ENCODE measurements at regions of chr7 and their contacts with region 1.

Region 1: GRCh38 chr7:140673063-140673773 is 473 bp downstream of the ADCK2 start:
- DNase-seq: peak; percentile 69
- H3K4me3 ChIP-seq: peak overlapping the region; percentile 81
- H3K27ac ChIP-seq: peak overlapping the region; percentile 98
- H3K4me1 ChIP-seq: peaks cover 63% of the 10 kb centered on the region
- CTCF ChIP-seq: peak; percentile 29; the same call in 1 of the 2 replicates

Region 2: GRCh38 chr7:139915864-139916716 is 757.1 kb before region 1 on chr7:
- CTCF ChIA-PET with region 1: no interaction called
- POLR2A ChIA-PET with region 1: no interaction called
- intact Hi-C with region 1: loop called (anchors 10 kb)
- DNase-seq: peak; percentile 89
- H3K4me3 ChIP-seq: peak overlapping the region; percentile 60
- H3K27ac ChIP-seq: peak overlapping the region; percentile 97
- H3K4me1 ChIP-seq: peaks cover 76% of the 10 kb centered on the region
- CTCF ChIP-seq: no peak

Region 3: GRCh38 chr7:140479062-140479738 is 194.0 kb before region 1 on chr7 and contains the start of gene MKRN1:
- CTCF ChIA-PET with region 1: no interaction called
- POLR2A ChIA-PET with region 1: no interaction called
- intact Hi-C with region 1: loop called (anchors 1 kb)
- DNase-seq: peak; percentile 94
- H3K4me3 ChIP-seq: peak within 1 kb of the TSS; percentile 98
- H3K27ac ChIP-seq: peak within 1 kb of the TSS; percentile 72
- H3K4me1 ChIP-seq: peaks cover 24% of the 10 kb centered on the region
- CTCF ChIP-seq: no peak
- total RNA-seq, gene MKRN1: 26.4 and 47.5 TPM in 2 replicates

Region 4: DNA sequence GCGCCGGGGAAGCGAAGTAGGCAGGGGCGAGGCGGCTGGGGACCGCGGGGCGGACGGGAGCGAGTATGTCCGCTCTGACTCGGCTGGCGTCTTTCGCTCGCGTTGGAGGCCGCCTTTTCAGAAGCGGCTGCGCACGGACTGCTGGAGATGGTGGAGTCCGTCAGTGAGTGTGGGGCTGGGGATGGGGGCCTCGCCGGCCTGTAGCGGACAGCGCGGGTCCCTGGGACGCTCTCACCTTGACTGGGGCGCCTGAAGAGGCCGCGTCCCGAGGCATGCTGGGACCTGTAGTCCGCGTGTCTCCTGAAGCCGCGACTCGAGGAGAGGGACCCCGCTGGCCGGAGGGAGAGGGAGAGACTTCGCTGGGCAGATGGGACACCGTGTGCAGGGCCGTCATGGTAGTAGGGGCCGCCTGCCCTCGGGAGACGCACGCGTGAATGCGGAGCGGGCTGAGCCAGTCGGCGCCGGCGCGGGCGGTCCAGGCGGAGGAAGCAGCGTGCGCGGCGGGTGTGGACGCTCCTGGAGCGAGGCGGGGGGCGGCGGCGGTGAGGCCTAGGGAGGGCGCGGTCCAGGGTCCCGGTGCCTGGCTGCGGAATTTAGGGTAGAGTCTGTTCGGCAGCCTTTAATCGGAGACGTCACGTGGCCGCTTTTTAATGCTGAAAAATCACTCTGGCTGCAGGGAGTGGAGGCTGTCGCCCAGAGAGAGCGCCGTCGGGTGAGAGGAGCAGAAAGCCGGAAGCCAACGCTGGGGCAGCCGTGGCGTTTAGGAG is 23.6 kb after region 1 on chr7 and contains the start of gene NDUFB2:
- CTCF ChIA-PET with region 1: no interaction called
- POLR2A ChIA-PET with region 1: interaction called, 10 read pairs
- intact Hi-C with region 1: loop called (anchors 1 kb)
- DNase-seq: peak; percentile 81
- H3K4me3 ChIP-seq: peak within 1 kb of the TSS; percentile 77
- H3K27ac ChIP-seq: peak within 1 kb of the TSS; percentile 66
- H3K4me1 ChIP-seq: peaks cover 21% of the 10 kb centered on the region
- CTCF ChIP-seq: peak; percentile 33; the same call in 1 of the 2 replicates
- total RNA-seq, gene NDUFB2: 139 and 158 TPM in 2 replicates

Region 5: DNA sequence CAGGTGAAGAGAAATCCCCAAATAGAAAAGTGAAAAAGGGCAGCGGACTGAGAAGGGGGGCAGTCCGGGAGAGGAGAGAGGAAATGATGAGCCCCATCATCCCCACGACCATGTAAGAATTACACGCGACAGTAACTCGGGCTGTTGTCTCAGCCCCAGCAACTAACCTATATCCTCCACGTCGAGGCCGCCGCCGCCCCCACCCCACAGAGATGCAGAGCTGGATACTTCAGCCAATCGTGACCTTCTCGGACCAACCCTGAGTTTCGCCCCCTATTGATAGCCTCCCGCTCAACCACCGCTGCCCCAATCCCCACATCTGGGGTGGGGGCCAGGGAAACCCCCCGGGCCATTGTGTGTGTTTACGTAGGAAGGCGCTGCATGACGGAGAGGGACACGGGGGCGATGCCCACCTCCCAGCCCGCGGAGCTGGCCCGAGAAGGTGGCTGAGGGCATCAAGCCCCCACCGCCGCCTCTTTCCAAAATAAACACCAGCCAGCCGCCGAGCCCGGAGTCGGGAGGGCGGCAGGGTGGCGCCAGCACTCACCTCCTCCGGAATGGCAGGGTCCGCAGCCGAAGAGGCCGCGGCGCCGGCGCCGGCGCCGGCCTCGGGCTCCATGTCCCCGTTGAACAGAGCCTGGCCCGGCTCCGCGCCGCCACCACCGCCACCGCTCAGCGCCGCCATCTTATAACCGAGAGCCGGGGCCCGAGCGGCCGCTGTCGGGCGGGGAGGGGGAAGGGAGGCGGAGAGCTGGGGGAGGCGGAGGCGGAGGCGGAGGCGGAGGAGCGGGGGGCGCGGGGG is 251.0 kb after region 1 on chr7:
- CTCF ChIA-PET with region 1: no interaction called
- POLR2A ChIA-PET with region 1: no interaction called
- intact Hi-C with region 1: loop called (anchors 2 kb)
- DNase-seq: peak; percentile 80
- H3K4me3 ChIP-seq: peak overlapping the region; percentile 92
- H3K27ac ChIP-seq: peak overlapping the region; percentile 73
- H3K4me1 ChIP-seq: peaks cover 36% of the 10 kb centered on the region
- CTCF ChIP-seq: peak; percentile 76

Measured in OCI-LY7 (cell line).